AG04450 (cell line): ENCODE measurements at regions of chr15 and their contacts with region 1.

Region 1: GRCh38 chr15:68672781-68673205 is 94.0 kb downstream of the CORO2B start:
- DNase-seq: no peak
- H3K4me3 ChIP-seq: no peak overlapping the region
- H3K27ac ChIP-seq: no peak overlapping the region
- H3K27me3 ChIP-seq: no peaks in the 10 kb centered on the region
- CTCF ChIP-seq: peak; percentile 42; the same call in 1 of the 2 replicates

Region 2: GRCh38 chr15:68304589-68305337 is 368.0 kb before region 1 on chr15:
- CTCF ChIA-PET with region 1: interaction called, 25 read pairs
- POLR2A ChIA-PET with region 1: no interaction called
- DNase-seq: no peak
- H3K4me3 ChIP-seq: no peak overlapping the region
- H3K27ac ChIP-seq: no peak overlapping the region
- H3K27me3 ChIP-seq: no peaks in the 10 kb centered on the region
- CTCF ChIP-seq: no peak

Region 3: GRCh38 chr15:68543165-68544008 is 129.4 kb before region 1 on chr15:
- CTCF ChIA-PET with region 1: interaction called, 138 read pairs
- POLR2A ChIA-PET with region 1: no interaction called
- DNase-seq: peak; percentile 80
- H3K4me3 ChIP-seq: no peak overlapping the region
- H3K27ac ChIP-seq: peak overlapping the region; percentile 80
- H3K27me3 ChIP-seq: no peaks in the 10 kb centered on the region
- CTCF ChIP-seq: no peak

Region 4: GRCh38 chr15:68565726-68566125 is 107.1 kb before region 1 on chr15:
- CTCF ChIA-PET with region 1: interaction called, 100 read pairs
- POLR2A ChIA-PET with region 1: no interaction called
- DNase-seq: no peak
- H3K4me3 ChIP-seq: no peak overlapping the region
- H3K27ac ChIP-seq: no peak overlapping the region
- H3K27me3 ChIP-seq: peaks cover 7% of the 10 kb centered on the region
- CTCF ChIP-seq: no peak

Region 5: GRCh38 chr15:68650901-68651709 is 21.7 kb before region 1 on chr15:
- CTCF ChIA-PET with region 1: interaction called, 12 read pairs
- POLR2A ChIA-PET with region 1: no interaction called
- DNase-seq: no peak
- H3K4me3 ChIP-seq: no peak overlapping the region
- H3K27ac ChIP-seq: no peak overlapping the region
- H3K27me3 ChIP-seq: no peaks in the 10 kb centered on the region
- CTCF ChIP-seq: peak; percentile 76

Region 6: GRCh38 chr15:68875377-68876116 is 202.8 kb after region 1 on chr15:
- CTCF ChIA-PET with region 1: interaction called, 34 read pairs
- POLR2A ChIA-PET with region 1: no interaction called
- DNase-seq: peak; percentile 65
- H3K4me3 ChIP-seq: peak overlapping the region; percentile 57
- H3K27ac ChIP-seq: peak overlapping the region; percentile 21
- H3K27me3 ChIP-seq: peaks cover 24% of the 10 kb centered on the region
- CTCF ChIP-seq: peak; percentile 86